Activated CD4-positive, alpha-beta memory T cell treated with anti-CD3 and anti-CD28 coated beads for 36 hours (primary cell): ENCODE measurements at regions of chr4 and their contacts with region 1.

Region 1: DNA sequence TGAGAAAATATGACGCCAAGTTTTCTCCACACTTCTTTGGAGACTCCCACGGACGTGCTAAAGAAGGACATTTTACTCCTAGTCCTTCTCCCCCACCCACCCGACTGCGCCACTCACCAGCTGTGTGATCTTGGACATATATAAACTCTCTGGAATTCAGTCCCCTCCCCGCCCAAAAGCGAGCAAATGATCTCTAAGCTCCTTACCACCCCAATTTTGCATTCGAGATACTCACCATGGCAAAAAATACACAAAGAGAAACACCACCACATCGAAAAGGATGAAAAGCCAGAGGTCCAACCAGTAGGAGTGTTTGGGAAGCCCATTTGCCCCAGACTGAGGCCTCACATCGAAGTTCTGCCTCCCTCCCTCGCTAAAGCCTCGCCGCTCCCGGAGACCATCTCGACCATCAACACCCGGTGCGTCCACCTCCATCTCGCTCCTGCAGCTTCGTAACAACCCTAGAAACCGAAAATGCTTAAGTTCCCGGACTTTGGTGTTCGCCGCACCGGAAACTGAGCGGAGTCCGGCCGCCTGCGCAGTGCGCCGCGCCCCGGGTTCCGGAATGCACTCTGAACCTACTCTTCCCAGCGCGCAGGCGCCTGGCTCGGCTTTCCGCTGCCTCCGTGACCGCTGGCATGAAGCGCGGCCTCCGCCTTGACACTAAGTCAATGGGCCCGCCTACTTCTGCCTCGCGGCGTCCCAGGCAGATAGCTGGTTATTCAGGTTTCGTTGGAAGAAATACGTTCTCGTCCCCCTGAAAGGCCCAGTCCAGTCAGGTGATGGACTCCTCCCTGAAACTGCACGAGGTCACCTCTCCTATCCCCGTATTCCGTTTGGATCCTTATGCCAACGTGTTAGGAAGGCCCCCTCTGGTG is 21.6 kb downstream of the FABP2 start:
- DNase-seq: peak; percentile 95
- H3K4me3 Mint-ChIP-seq: peak overlapping the region; percentile 96
- H3K27ac Mint-ChIP-seq: peak overlapping the region; percentile 97
- H3K4me1 Mint-ChIP-seq: peaks cover 30% of the 10 kb centered on the region
- H3K27me3 Mint-ChIP-seq: no peaks in the 10 kb centered on the region

Region 2: GRCh38 chr4:118586357-118586790 is 714.0 kb before region 1 on chr4:
- CTCF ChIA-PET with region 1: no interaction called
- POLR2A ChIA-PET with region 1: no interaction called
- intact Hi-C with region 1: loop called (anchors 1 kb)
- DNase-seq: no peak
- H3K4me3 Mint-ChIP-seq: no peak overlapping the region
- H3K27ac Mint-ChIP-seq: no peak overlapping the region
- H3K4me1 Mint-ChIP-seq: peaks cover 4% of the 10 kb centered on the region
- H3K27me3 Mint-ChIP-seq: peaks cover 23% of the 10 kb centered on the region

Region 3: GRCh38 chr4:118835571-118836300 is 464.6 kb before region 1 on chr4 and contains the start of gene SEC24D:
- CTCF ChIA-PET with region 1: no interaction called
- POLR2A ChIA-PET with region 1: no interaction called
- intact Hi-C with region 1: loop called (anchors 2 kb)
- DNase-seq: peak; percentile 89
- H3K4me3 Mint-ChIP-seq: peak within 1 kb of the TSS; percentile 88
- H3K27ac Mint-ChIP-seq: peak within 1 kb of the TSS; percentile 91
- H3K4me1 Mint-ChIP-seq: peaks cover 23% of the 10 kb centered on the region
- H3K27me3 Mint-ChIP-seq: no peaks in the 10 kb centered on the region
- total RNA-seq, gene SEC24D: 36.2 to 41.0 TPM

Region 4: GRCh38 chr4:119041951-119042560 is 258.3 kb before region 1 on chr4:
- CTCF ChIA-PET with region 1: interaction called, 35 read pairs
- POLR2A ChIA-PET with region 1: no interaction called
- intact Hi-C with region 1: no loop called
- DNase-seq: peak; percentile 63
- H3K4me3 Mint-ChIP-seq: no peak overlapping the region
- H3K27ac Mint-ChIP-seq: no peak overlapping the region
- H3K4me1 Mint-ChIP-seq: peaks cover 11% of the 10 kb centered on the region
- H3K27me3 Mint-ChIP-seq: peaks cover 2% of the 10 kb centered on the region

Region 5: GRCh38 chr4:119238068-119238722 is 62.1 kb before region 1 on chr4:
- CTCF ChIA-PET with region 1: interaction called, 5 read pairs
- POLR2A ChIA-PET with region 1: interaction called, 3 read pairs
- intact Hi-C with region 1: loop called (anchors 1 kb)
- DNase-seq: peak; percentile 54
- H3K4me3 Mint-ChIP-seq: no peak overlapping the region
- H3K27ac Mint-ChIP-seq: peak overlapping the region; percentile 69
- H3K4me1 Mint-ChIP-seq: peaks cover 33% of the 10 kb centered on the region
- H3K27me3 Mint-ChIP-seq: no peaks in the 10 kb centered on the region

Region 6: GRCh38 chr4:119286377-119287002 is 13.8 kb before region 1 on chr4:
- CTCF ChIA-PET with region 1: interaction called, 5 read pairs
- POLR2A ChIA-PET with region 1: interaction called, 5 read pairs
- intact Hi-C with region 1: loop called (anchors 1 kb)
- DNase-seq: peak; percentile 22
- H3K4me3 Mint-ChIP-seq: no peak overlapping the region
- H3K27ac Mint-ChIP-seq: no peak overlapping the region
- H3K4me1 Mint-ChIP-seq: peaks cover 16% of the 10 kb centered on the region
- H3K27me3 Mint-ChIP-seq: no peaks in the 10 kb centered on the region

Region 7: DNA sequence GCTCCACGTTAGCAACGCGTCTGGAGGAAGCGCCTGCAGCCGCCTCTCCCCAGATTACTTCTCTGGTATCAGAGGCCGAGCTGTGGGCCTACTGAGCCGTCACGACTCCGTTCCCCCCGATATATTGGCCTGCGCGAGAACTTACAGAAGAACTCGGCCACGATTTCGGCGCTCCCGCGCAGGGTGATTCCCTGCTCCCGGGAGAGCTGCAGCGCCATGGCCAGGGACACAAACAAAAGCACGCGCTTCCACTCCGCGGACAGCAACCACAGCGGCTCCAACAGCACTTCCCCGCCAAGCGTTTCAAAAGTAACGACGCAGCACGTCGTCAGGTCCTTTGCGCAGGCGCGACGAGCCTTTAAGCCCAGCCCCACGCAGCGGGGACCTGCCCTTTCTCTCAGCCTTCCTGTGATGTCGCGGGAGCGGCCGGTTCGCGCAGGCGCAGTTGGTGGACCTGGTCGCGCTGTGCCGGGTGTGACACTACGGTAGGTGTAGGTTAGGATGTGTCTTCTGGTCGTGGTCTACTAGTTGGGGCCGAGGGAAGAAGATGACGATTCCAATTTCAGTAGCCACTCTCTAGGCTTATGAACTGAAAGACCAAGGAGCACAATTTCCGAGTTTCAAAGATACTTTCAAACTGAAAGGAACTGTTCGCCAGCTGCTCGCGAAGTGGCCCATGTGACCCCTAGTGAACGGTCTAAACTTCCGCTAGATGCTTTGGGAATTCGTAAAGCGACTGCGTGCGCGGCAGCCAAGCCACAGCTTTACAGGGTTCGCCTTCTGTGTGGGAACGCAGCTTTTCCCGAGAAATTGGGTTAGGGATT is 766.4 kb after region 1 on chr4 and contains the start of gene MAD2L1:
- CTCF ChIA-PET with region 1: no interaction called
- POLR2A ChIA-PET with region 1: no interaction called
- intact Hi-C with region 1: loop called (anchors 1 kb)
- DNase-seq: peak; percentile 99
- H3K4me3 Mint-ChIP-seq: peak within 1 kb of the TSS; percentile 98
- H3K27ac Mint-ChIP-seq: peak within 1 kb of the TSS; percentile 99
- H3K4me1 Mint-ChIP-seq: peaks cover 58% of the 10 kb centered on the region
- H3K27me3 Mint-ChIP-seq: no peaks in the 10 kb centered on the region
- total RNA-seq, gene MAD2L1: 92.0 to 96.6 TPM